Lower leg skin (tissue), 4 donors: ENCODE measurements at regions of chr4 and their contacts with region 1.

Region 1: GRCh38 chr4:126004941-126005340 is 690.2 kb downstream of the FAT4 start:
- DNase-seq: no peak
- H3K4me3 ChIP-seq: no peak overlapping the region
- CTCF ChIP-seq: no peak
- POLR2A ChIP-seq: no peak

Region 2: GRCh38 chr4:125985856-125986255 is 19.1 kb before region 1 on chr4:
- intact Hi-C with region 1: loop called (anchors 2 kb)
- DNase-seq: no peak
- H3K4me3 ChIP-seq: no peak overlapping the region
- CTCF ChIP-seq: no peak
- POLR2A ChIP-seq: no peak

Region 3: GRCh38 chr4:126038502-126039144 is 33.7 kb after region 1 on chr4:
- intact Hi-C with region 1: no loop called
- DNase-seq: no peak
- H3K4me3 ChIP-seq: no peak overlapping the region
- CTCF ChIP-seq: no peak
- POLR2A ChIP-seq: no peak